AG04450 (cell line): ENCODE measurements at regions of chr5 and their contacts with region 1.

Region 1: DNA sequence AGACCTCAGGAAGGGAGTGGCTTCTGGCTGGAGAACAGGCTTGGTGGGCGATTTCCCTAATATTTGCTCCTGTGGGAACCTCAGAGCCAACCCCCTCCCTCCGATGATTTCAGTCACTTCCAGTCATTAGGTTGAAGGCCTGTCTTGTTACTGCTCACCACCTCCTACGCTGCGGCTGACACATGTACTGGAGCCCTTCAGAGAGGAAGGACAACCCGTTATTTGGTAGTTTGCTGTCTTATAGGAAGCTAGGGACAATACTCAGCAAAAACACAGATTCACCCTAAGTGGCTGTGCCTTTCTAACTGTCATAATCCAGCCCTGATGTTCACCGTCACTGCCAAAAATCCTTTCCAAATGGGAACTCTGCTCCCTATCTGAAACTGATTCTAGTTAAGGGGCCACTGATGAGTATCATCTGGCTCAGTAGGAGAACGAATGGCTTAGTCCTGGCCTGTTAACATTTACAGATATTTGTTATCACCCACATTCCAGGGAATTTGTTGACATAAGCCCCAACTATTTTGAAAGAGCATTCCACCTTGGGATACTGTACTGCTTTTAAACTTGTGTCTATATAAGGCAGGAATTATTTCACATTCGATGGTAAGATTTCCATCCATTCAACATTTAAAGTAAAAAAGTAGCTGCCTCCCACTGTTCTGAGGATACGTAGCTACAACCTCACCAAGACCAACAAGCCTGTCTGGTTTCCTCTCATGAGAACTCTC is 29.3 kb upstream of the ANKH start:
- DNase-seq: peak; percentile 79
- H3K4me3 ChIP-seq: no peak overlapping the region
- H3K27ac ChIP-seq: peak overlapping the region; percentile 99
- H3K27me3 ChIP-seq: no peaks in the 10 kb centered on the region
- CTCF ChIP-seq: no peak

Region 2: GRCh38 chr5:14871210-14872069 is 29.5 kb before region 1 on chr5 and contains the start of gene ANKH:
- CTCF ChIA-PET with region 1: interaction called, 3 read pairs
- POLR2A ChIA-PET with region 1: interaction called, 11 read pairs
- DNase-seq: peak; percentile 16
- H3K4me3 ChIP-seq: peak within 1 kb of the TSS; percentile 79
- H3K27ac ChIP-seq: peak within 1 kb of the TSS; percentile 34
- H3K27me3 ChIP-seq: no peaks in the 10 kb centered on the region
- CTCF ChIP-seq: no peak
- polyA plus RNA-seq, gene ANKH: 14.2 and 14.3 TPM in 2 replicates

Region 3: DNA sequence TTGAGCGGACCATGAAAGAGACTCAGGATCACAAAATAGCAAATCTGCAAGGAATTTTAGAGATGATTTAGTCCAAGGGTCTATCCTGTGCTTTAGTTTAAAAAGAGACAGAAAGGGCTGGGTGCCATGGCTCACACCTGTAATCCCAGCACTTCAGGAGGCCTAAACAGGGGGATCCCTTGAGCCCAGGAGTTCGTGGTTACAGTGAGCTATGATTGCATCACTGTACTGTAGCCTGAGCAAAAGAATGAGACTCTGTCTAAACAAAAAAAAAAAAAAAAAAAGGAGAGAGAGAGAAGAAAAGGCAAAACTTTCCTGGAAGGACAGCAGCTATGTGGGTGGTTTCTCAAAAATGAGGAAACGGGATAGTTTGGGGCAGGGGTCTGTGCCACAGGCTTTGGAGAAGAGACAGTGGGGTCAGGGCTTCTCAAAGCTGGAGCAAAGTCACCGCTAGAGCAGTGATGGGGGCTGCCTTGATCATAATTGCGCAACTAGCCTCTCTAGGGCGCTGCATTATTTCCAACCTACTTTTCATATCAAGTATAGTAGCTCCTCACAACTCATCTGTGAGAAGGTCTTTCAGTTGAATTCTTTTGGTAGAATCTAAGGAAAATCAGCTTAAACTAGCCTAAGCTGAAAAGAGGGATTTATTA is 20.8 kb before region 1 on chr5:
- CTCF ChIA-PET with region 1: no interaction called
- POLR2A ChIA-PET with region 1: interaction called, 10 read pairs
- DNase-seq: peak; percentile 32
- H3K4me3 ChIP-seq: no peak overlapping the region
- H3K27ac ChIP-seq: peak overlapping the region; percentile 21
- H3K27me3 ChIP-seq: no peaks in the 10 kb centered on the region
- CTCF ChIP-seq: no peak